Ovary (tissue), 10 donors: ENCODE measurements at regions of chr12 and their contacts with region 1.

Region 1: DNA sequence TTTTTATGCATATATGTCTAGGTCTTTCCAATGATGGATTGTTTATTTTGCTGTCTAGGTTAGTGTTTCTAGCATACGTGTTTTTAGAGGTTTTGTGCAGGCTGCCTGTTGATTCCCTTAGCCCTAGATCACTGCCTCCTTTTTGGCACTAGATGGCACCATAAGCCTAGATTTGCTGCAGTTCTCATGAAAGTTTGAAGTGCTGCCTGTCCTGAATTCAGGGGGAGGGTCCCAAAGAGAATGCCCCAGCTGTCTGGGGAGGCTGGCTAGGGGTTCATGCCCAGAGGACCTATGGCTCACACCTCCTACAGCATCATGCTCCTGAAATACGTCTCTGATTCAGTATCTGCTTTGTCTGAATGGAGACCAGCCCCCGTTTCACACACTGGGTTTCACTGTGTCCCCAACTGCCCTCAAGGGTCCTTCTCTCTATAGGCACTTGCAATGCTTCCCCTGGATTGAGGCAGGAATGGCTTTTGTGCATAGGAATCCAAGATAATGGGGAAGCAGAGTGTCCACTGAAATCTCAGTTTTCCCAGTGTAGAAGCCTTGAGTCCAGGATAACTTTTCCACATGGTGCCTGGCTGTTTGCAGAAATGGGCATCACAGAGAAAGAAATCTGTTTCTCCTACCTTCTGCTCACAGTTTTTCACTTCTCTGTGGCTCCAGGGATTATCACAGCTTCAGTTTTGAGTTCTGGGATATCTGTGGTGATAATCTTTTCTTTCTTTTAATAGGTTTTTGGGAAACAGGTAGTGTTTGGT is 14.2 kb upstream of the TXNRD1 start:
- DNase-seq: peak in 3 of 5 donors; percentile 33 to 61 (median 34)
- H3K4me3 ChIP-seq: no peak overlapping the region
- H3K27ac ChIP-seq: no peak overlapping the region
- H3K4me1 ChIP-seq: no peaks in the 10 kb centered on the region
- H3K27me3 ChIP-seq: no peaks in the 10 kb centered on the region
- CTCF ChIP-seq: peak; percentile 22 to 82 (median 67)
- EP300 ChIP-seq: no peak
- POLR2A ChIP-seq: no peak

Region 2: GRCh38 chr12:104286538-104287482 is 85.4 kb after region 1 on chr12:
- intact Hi-C with region 1: no loop called
- DNase-seq: peak; percentile 92 to 95 (median 93)
- H3K4me3 ChIP-seq: peak overlapping the region; percentile 73
- H3K27ac ChIP-seq: peak overlapping the region; percentile 78 to 81
- H3K4me1 ChIP-seq: peaks cover 9% of the 10 kb centered on the region
- H3K27me3 ChIP-seq: no peaks in the 10 kb centered on the region
- CTCF ChIP-seq: no peak
- EP300 ChIP-seq: peak; percentile 64
- POLR2A ChIP-seq: peak; percentile 85

Region 3: GRCh38 chr12:104334581-104334980 is 133.2 kb after region 1 on chr12:
- intact Hi-C with region 1: no loop called
- DNase-seq: no peak
- H3K4me3 ChIP-seq: no peak overlapping the region
- H3K27ac ChIP-seq: no peak overlapping the region
- H3K4me1 ChIP-seq: no peaks in the 10 kb centered on the region
- H3K27me3 ChIP-seq: no peaks in the 10 kb centered on the region
- CTCF ChIP-seq: no peak
- EP300 ChIP-seq: no peak
- POLR2A ChIP-seq: no peak

Region 4: DNA sequence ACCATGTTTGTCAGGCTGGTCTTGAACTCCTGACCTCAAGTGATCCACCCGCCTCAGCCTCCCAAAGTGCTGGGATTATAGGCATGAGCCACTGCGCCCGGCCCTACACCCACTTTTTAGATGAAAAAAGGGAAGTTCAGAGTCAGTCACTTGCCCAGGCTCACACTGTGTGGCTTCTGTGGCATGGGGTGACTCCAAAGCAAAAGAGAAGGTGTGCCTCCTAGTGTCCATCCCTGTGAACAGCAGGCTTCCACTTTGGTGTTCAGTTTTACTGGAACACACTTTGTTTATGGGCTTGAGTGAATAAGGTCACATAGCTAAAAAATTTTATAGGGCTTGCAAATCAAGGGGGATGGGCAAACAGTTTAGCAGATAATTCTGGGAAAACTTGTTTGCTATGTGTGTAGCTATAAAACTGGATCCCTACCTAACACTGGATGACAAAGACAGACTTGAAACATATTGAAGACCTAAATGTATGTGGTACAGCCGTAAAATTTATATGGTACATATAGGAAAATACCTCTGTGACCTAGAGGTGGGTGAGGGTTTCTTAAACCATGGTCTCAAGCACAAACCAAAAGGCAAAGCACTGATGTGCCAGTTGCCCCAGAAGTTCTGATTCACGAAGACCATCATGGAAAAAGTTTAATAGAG is 157.1 kb after region 1 on chr12:
- intact Hi-C with region 1: loop called in 2 of 4 experiments (anchors 5 to 10 kb)
- DNase-seq: peak; percentile 41 to 63 (median 43)
- H3K4me3 ChIP-seq: no peak overlapping the region
- H3K27ac ChIP-seq: no peak overlapping the region
- H3K4me1 ChIP-seq: peaks cover 2% of the 10 kb centered on the region
- H3K27me3 ChIP-seq: no peaks in the 10 kb centered on the region
- CTCF ChIP-seq: peak in 2 of 3 donors; percentile 57 to 73
- EP300 ChIP-seq: no peak
- POLR2A ChIP-seq: no peak

Region 5: DNA sequence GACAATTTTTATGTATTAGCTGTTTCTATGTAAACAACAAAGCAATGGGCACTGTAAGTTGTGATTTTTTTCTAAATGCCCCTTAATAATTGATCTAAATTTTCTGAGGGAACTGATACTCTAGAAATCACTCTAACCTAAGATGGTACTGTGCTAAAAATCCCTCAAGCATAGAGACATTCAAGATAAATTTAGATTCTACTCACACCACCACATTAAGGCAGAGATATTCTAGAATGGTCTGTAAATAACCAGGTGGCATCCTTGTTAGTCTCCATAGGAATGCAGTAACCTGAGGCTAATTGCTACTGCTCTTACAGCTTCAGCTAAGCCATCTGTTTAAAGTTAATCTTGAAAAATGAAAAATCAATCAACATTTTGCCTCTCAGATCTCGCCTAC is 669.4 kb after region 1 on chr12:
- intact Hi-C with region 1: loop called in 1 of 4 experiments (anchors 5 kb)
- DNase-seq: no peak
- H3K4me3 ChIP-seq: no peak overlapping the region
- H3K27ac ChIP-seq: no peak overlapping the region
- H3K4me1 ChIP-seq: no peaks in the 10 kb centered on the region
- H3K27me3 ChIP-seq: no peaks in the 10 kb centered on the region
- CTCF ChIP-seq: no peak
- EP300 ChIP-seq: no peak
- POLR2A ChIP-seq: no peak